ENCODE measurements at regions of chr14 and their contacts with region 1.

Region 1: GRCh38 chr14:45201905-45202304 is 51.1 kb downstream of the MIS18BP1 start:
- DNase-seq: no peak
- H3K4me3 ChIP-seq: no peak overlapping the region
- H3K27ac ChIP-seq: no peak overlapping the region
- H3K4me1 ChIP-seq: no peaks in the 10 kb centered on the region
- H3K27me3 ChIP-seq: no peaks in the 10 kb centered on the region
- CTCF ChIP-seq: no peak

Region 2: GRCh38 chr14:45222485-45223262 is 20.8 kb after region 1 on chr14:
- CTCF ChIA-PET with region 1: no interaction called
- POLR2A ChIA-PET with region 1: interaction called, 10 read pairs
- intact Hi-C with region 1: no loop called
- DNase-seq: no peak
- H3K4me3 ChIP-seq: no peak overlapping the region
- H3K27ac ChIP-seq: no peak overlapping the region
- H3K4me1 ChIP-seq: no peaks in the 10 kb centered on the region
- H3K27me3 ChIP-seq: no peaks in the 10 kb centered on the region
- CTCF ChIP-seq: no peak

Region 3: GRCh38 chr14:45406942-45407341 is 205.0 kb after region 1 on chr14:
- CTCF ChIA-PET with region 1: no interaction called
- POLR2A ChIA-PET with region 1: no interaction called
- intact Hi-C with region 1: no loop called
- DNase-seq: no peak
- H3K4me3 ChIP-seq: no peak overlapping the region
- H3K27ac ChIP-seq: no peak overlapping the region
- H3K4me1 ChIP-seq: no peaks in the 10 kb centered on the region
- H3K27me3 ChIP-seq: no peaks in the 10 kb centered on the region
- CTCF ChIP-seq: no peak